Activated B cell treated with CpG ODN at 0.5 μM for 24 hours (primary cell): ENCODE measurements at regions of chr2 and their contacts with region 1.

Region 1: GRCh38 chr2:162318328-162319180 is at the start of gene IFIH1:
- DNase-seq: peak; percentile 72
- ATAC-seq: peak; percentile 93
- H3K4me3 Mint-ChIP-seq: peak within 1 kb of the TSS; percentile 94
- H3K27ac Mint-ChIP-seq: peak within 1 kb of the TSS; percentile 99
- H3K4me1 Mint-ChIP-seq: peaks cover 68% of the 10 kb centered on the region
- H3K27me3 Mint-ChIP-seq: no peaks in the 10 kb centered on the region
- CTCF ChIP-seq: no peak
- total RNA-seq, gene IFIH1: 61.8 and 63.0 TPM in 2 replicates

Region 2: GRCh38 chr2:162343824-162344616 is 25.5 kb after region 1 on chr2 and contains the start of gene GCA:
- CTCF ChIA-PET with region 1: no interaction called
- POLR2A ChIA-PET with region 1: interaction called, 32 read pairs
- intact Hi-C with region 1: loop called (anchors 1 kb)
- DNase-seq: peak; percentile 99
- ATAC-seq: peak; percentile 98
- H3K4me3 Mint-ChIP-seq: peak within 1 kb of the TSS; percentile 91
- H3K27ac Mint-ChIP-seq: peak within 1 kb of the TSS; percentile 84
- H3K4me1 Mint-ChIP-seq: peaks cover 18% of the 10 kb centered on the region
- H3K27me3 Mint-ChIP-seq: no peaks in the 10 kb centered on the region
- CTCF ChIP-seq: no peak
- total RNA-seq, gene GCA: 31.3 and 33.9 TPM in 2 replicates